ENCODE measurements at regions of chr19 and their contacts with region 1.

Region 1: DNA sequence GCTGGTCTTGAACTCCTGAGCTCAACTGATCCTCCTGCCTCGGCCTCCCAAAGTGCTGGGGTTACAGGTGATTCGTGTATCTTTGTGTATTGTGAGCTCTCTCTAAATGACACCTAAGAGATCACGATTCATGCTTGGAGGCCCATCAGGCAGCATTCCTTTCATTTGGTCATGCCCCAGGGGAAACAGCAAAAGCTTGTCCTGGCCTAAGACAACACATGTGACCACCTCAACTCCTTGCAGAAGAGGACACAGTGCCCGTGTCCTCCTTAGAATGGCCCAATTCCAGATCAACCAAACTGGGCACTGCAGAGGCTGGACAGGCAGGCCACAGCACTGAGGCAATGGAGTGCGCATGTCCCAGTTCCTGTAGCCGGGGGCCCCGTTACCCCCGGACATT is 32.5 kb downstream of the ZC3H4 start:
- DNase-seq: no peak
- H3K4me3 Mint-ChIP-seq: no peak overlapping the region
- H3K27ac Mint-ChIP-seq: no peak overlapping the region
- H3K4me1 Mint-ChIP-seq: peaks cover 2% of the 10 kb centered on the region
- H3K27me3 Mint-ChIP-seq: no peaks in the 10 kb centered on the region

Region 2: GRCh38 chr19:47107202-47107940 is 26.3 kb after region 1 on chr19:
- CTCF ChIA-PET with region 1: interaction called, 9 read pairs
- POLR2A ChIA-PET with region 1: interaction called, 41 read pairs
- DNase-seq: peak; percentile 65
- H3K4me3 Mint-ChIP-seq: peak overlapping the region; percentile 38
- H3K27ac Mint-ChIP-seq: peak overlapping the region; percentile 100
- H3K4me1 Mint-ChIP-seq: peaks cover 62% of the 10 kb centered on the region
- H3K27me3 Mint-ChIP-seq: no peaks in the 10 kb centered on the region

Region 3: DNA sequence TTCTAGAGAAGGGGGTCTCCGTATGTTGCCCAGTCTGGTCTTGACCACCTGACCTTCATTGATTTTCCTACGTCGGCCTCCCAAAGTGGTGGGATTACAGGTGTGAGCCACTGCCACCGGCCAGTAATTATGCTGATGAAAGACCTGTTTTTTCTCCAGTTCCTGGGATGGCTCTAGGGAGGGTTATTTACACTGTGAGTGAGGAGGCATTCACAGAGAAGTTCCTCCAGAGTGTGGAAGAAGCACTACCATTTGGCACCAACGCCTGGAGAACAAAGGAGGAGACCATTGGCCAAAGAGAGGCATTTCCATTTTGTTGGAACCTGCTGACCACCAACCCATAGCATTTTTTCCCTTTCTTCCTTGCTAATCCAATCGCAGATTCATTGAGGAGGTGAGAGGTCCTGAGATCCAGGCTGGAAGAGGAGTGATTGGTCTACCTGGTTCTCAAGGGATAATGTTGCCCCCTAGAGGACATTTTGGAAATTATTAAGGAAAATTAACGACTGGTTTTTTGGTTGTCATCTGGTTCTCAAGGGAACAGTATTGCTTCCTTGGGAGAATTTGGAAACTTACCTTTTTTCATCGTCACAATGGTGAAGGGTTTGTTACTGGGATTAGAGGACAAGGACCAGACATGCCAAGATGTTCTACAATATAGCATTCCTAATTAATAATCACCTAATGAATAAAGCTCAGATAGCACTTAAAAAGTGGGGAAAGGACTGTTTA is 44.0 kb after region 1 on chr19:
- CTCF ChIA-PET with region 1: interaction called, 41 read pairs
- POLR2A ChIA-PET with region 1: interaction called, 6 read pairs
- DNase-seq: peak; percentile 22
- H3K4me3 Mint-ChIP-seq: no peak overlapping the region
- H3K27ac Mint-ChIP-seq: no peak overlapping the region
- H3K4me1 Mint-ChIP-seq: peaks cover 7% of the 10 kb centered on the region
- H3K27me3 Mint-ChIP-seq: peaks cover 2% of the 10 kb centered on the region